Dendritic cell treated with granulocyte-macrophage colony-stimulating factor and Interleukin-4, amounts not matched to agents 40 ng/mL and 50 ng/mL, for 4 days (primary cell): ENCODE measurements at regions of chr1 and their contacts with region 1.

Region 1: DNA sequence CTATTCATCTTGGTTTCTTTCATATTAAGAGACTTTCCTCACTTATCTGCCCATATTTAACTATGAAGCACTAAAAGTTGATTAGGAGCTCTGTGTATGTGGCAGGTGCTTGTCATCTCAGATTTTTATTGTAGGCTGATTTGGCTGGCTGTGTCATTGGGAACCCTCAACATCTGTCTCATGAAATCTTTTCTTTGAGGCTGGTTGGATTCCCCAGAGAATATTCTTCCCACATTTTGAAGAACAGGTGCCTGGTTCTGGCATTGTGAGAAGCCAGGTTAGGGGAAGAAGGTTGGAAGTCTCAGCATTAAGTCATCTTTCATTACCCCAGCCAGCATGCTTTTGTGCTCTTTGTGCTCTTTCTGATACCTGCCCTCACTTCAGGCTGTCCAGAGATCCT is 37.1 kb downstream of the EEIG2 start:
- H3K4me3 Mint-ChIP-seq: no peak overlapping the region
- H3K27ac Mint-ChIP-seq: no peak overlapping the region
- H3K4me1 Mint-ChIP-seq: peaks cover 22% of the 10 kb centered on the region
- H3K27me3 Mint-ChIP-seq: no peaks in the 10 kb centered on the region

Region 2: DNA sequence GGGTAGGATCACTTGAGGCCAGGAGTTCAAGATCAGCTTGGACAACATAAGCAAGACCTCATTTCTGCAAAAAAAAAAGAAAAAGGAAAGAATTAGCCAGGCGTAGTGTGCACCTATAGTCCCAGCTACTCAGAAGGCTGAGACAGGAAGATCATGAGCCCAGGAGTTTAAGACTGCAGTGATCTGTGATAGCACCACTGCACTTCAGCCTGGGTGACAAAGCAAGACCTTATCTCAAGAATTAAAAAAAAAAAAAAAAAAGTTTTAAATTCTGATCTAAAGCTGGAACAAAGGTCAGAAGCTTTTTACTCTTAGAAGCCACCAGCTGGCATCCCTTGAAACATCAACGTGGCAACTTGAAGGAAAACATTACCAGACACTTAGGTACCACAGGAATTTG is 18.5 kb after region 1 on chr1:
- intact Hi-C with region 1: loop called (anchors 2 kb)
- H3K4me3 Mint-ChIP-seq: no peak overlapping the region
- H3K27ac Mint-ChIP-seq: no peak overlapping the region
- H3K4me1 Mint-ChIP-seq: no peaks in the 10 kb centered on the region
- H3K27me3 Mint-ChIP-seq: no peaks in the 10 kb centered on the region

Region 3: GRCh38 chr1:108841703-108842102 is 244.7 kb after region 1 on chr1:
- intact Hi-C with region 1: no loop called
- H3K4me3 Mint-ChIP-seq: no peak overlapping the region
- H3K27ac Mint-ChIP-seq: no peak overlapping the region
- H3K4me1 Mint-ChIP-seq: no peaks in the 10 kb centered on the region
- H3K27me3 Mint-ChIP-seq: no peaks in the 10 kb centered on the region